Ascending aorta (tissue), 2 donors: ENCODE measurements at regions of chr5 and their contacts with region 1.

Region 1: DNA sequence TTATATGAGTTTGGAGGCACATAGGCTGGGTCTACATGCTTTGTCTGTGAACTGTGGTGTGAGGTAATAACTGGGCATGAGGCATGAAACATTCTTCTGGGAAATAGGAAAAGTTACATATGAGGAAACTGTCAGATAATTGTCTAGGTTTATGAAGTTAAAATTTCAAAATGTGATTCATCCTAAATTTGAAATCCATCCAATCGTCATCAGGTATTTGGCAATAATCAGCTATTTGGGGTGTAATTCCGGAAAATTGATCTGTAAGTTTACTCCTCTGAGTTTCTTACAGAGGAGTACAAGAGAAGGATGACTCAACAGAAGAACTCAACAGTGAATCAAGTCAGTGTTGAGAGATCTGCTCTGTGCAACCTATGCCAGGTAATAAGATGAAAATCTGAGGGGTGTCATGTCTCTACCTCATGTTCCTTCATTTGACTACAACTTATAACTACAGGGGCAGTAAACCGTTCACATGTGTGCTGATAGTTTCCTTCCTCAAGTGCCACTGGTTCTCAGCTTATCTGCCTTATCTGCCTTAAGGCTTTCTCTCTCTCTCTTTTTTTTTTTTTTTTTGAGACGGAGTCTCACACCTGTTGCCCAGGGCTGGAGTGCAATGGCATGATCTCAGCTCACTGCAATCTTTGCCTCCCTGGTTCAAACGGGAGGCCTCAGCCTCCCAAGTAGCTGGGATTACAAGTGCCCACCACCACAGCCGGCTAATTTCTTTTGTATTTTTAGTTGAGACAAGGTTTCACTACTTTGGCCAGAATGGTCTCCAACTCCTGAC is 1171.7 kb upstream of the CDH18 start:
- DNase-seq: no peak
- H3K4me3 ChIP-seq: no peak overlapping the region
- H3K27ac ChIP-seq: no peak overlapping the region
- H3K4me1 ChIP-seq: no peaks in the 10 kb centered on the region
- H3K27me3 ChIP-seq: no peaks in the 10 kb centered on the region
- CTCF ChIP-seq: no peak

Region 2: GRCh38 chr5:21191753-21192152 is 32.0 kb after region 1 on chr5:
- intact Hi-C with region 1: loop called (anchors 1 kb)
- DNase-seq: no peak
- H3K4me3 ChIP-seq: no peak overlapping the region
- H3K27ac ChIP-seq: no peak overlapping the region
- H3K4me1 ChIP-seq: no peaks in the 10 kb centered on the region
- H3K27me3 ChIP-seq: no peaks in the 10 kb centered on the region
- CTCF ChIP-seq: no peak

Region 3: DNA sequence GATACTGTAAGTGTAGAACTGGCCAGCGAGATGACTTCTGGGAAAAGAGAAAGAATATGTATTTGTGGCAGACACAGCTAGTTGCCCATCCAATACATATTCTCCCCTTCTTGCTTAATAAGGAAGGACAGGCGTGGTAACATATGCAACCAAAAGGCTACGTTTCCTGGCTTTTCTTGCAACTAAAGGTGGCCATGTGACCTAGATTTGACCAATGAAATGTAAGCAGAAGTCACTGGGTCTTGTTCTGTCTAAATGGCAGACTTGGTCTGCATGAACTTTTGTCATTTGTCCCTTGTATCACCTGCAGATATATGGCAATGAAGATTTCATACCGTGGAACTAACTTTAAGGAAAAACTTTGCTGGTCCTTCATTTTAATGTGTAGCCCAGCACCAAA is 1509.6 kb after region 1 on chr5:
- intact Hi-C with region 1: no loop called
- DNase-seq: no peak
- H3K4me3 ChIP-seq: no peak overlapping the region
- H3K27ac ChIP-seq: no peak overlapping the region
- H3K4me1 ChIP-seq: no peaks in the 10 kb centered on the region
- H3K27me3 ChIP-seq: no peaks in the 10 kb centered on the region
- CTCF ChIP-seq: no peak